Caco-2 (cell line): ENCODE measurements at regions of chr15 and their contacts with region 1.

Region 1: DNA sequence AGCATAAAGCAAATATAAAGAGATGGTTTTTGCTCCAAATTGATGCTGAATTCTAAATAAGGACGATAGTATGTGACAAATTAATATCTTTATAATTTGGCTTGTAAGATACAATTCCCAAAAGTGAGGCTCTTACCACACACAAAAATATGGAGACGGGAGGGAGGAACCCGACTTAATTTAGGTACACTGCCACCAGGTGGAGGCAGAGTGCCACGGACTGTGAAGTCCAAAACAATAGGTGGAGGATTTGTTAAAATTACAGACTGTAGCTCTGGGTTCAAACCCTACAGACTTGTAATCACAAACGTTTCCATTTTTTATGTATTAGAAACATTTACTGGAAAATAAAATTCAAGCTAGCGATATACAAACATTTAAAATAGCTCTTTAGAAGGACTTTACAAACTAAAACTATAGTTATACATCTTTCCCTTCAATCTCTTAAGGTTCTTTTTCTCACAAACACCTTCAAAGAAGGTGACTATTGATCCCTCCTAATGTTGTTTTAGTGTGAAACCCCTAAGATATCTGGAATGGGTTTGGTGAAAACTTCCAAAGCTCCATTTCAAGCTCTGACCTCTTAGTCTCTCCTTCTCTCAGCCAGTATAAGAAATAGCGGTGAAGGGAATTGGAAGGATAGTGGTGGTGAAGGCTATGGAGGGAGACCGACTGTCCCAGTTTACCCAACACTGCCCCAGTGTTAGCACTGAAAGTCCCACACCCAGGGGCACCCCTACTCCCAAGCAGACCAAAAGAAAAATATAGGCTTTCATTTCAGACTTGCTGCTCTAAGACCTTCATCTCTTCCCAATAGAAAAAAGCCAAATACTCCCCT is 89.7 kb downstream of the AQP9 start:
- DNase-seq: peak; percentile 61 to 79
- H3K4me3 ChIP-seq: no peak overlapping the region
- H3K4me3 Mint-ChIP-seq: no peak overlapping the region
- H3K27ac Mint-ChIP-seq: no peak overlapping the region
- H3K4me1 ChIP-seq: peaks cover 5% of the 10 kb centered on the region; the same call in 1 of the 2 replicates
- H3K4me1 Mint-ChIP-seq: peaks cover 10% of the 10 kb centered on the region
- H3K27me3 ChIP-seq: no peaks in the 10 kb centered on the region
- H3K27me3 Mint-ChIP-seq: no peaks in the 10 kb centered on the region
- CTCF ChIP-seq: peak; percentile 81 to 85

Region 2: DNA sequence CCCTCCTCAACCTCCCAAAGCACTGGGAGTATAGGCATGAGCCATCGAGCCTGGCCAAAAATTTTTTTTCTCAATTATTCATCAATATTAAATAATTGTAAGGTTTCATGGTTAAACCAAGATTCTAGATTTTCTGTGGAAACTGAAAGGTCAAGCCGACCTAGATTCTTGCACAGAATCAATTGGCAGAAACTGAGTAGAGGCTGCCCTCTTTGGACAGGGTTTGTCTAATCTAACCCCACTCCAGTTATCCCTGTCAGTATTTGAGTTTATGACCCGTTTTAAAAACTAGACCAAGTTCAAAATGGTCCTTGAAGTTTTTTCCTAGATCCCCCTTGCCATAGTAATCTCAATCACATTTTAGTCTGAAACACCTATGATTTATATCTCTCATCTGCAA is 530.2 kb after region 1 on chr15:
- CTCF ChIA-PET with region 1: no interaction called
- POLR2A ChIA-PET with region 1: no interaction called
- intact Hi-C with region 1: loop called (anchors 1 kb)
- DNase-seq: peak in 1 of 2 experiments; percentile 19
- H3K4me3 ChIP-seq: no peak overlapping the region
- H3K4me3 Mint-ChIP-seq: no peak overlapping the region
- H3K27ac Mint-ChIP-seq: no peak overlapping the region
- H3K4me1 ChIP-seq: no peaks in the 10 kb centered on the region
- H3K4me1 Mint-ChIP-seq: no peaks in the 10 kb centered on the region
- H3K27me3 ChIP-seq: no peaks in the 10 kb centered on the region
- H3K27me3 Mint-ChIP-seq: no peaks in the 10 kb centered on the region
- CTCF ChIP-seq: peak in 1 of 2 experiments; percentile 19

Region 3: GRCh38 chr15:58864602-58865424 is 636.9 kb after region 1 on chr15:
- CTCF ChIA-PET with region 1: no interaction called
- POLR2A ChIA-PET with region 1: no interaction called
- intact Hi-C with region 1: loop called (anchors 10 kb)
- DNase-seq: peak in 1 of 2 experiments; percentile 8
- H3K4me3 ChIP-seq: no peak overlapping the region
- H3K4me3 Mint-ChIP-seq: no peak overlapping the region
- H3K27ac Mint-ChIP-seq: no peak overlapping the region
- H3K4me1 ChIP-seq: no peaks in the 10 kb centered on the region
- H3K4me1 Mint-ChIP-seq: peaks cover 16% of the 10 kb centered on the region
- H3K27me3 ChIP-seq: no peaks in the 10 kb centered on the region
- H3K27me3 Mint-ChIP-seq: no peaks in the 10 kb centered on the region
- CTCF ChIP-seq: no peak